A673 (cell line): ENCODE measurements at regions of chr3 and their contacts with region 1.

Region 1: GRCh38 chr3:120558771-120559241 is 37.3 kb upstream of the NDUFB4 start:
- DNase-seq: peak; percentile 86
- H3K4me3 ChIP-seq: peak overlapping the region; percentile 52
- H3K27ac ChIP-seq: no peak overlapping the region
- H3K4me1 ChIP-seq: peaks cover 5% of the 10 kb centered on the region
- H3K27me3 ChIP-seq: no peaks in the 10 kb centered on the region
- CTCF ChIP-seq: peak; percentile 96

Region 2: DNA sequence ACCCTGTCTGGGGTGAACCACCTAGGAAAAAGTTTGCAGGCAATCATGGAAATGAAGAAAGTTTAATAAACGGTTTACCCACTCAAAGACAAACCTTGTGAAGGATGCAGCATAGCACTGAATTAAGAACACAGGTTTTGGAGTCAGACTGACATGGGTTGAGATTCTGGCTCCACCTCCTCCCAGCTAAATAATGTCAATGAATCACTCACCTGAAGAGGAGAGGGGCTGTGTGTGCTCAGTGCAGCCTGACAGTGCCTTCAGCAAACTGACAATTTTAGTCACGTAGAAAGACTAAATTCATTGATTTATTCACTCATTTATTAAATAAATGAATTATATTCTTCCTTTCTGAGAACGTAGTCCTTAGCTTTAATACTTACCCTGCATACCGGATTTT is 758.0 kb before region 1 on chr3:
- CTCF ChIA-PET with region 1: no interaction called
- POLR2A ChIA-PET with region 1: no interaction called
- intact Hi-C with region 1: no loop called
- DNase-seq: no peak
- H3K4me3 ChIP-seq: no peak overlapping the region
- H3K27ac ChIP-seq: no peak overlapping the region
- H3K4me1 ChIP-seq: no peaks in the 10 kb centered on the region
- H3K27me3 ChIP-seq: peaks cover 39% of the 10 kb centered on the region
- CTCF ChIP-seq: no peak

Region 3: GRCh38 chr3:119891944-119892721 is 666.7 kb before region 1 on chr3:
- CTCF ChIA-PET with region 1: no interaction called
- POLR2A ChIA-PET with region 1: no interaction called
- intact Hi-C with region 1: loop called (anchors 5 kb)
- DNase-seq: peak; percentile 83
- H3K4me3 ChIP-seq: no peak overlapping the region
- H3K27ac ChIP-seq: no peak overlapping the region
- H3K4me1 ChIP-seq: no peaks in the 10 kb centered on the region
- H3K27me3 ChIP-seq: no peaks in the 10 kb centered on the region
- CTCF ChIP-seq: peak; percentile 78

Region 4: DNA sequence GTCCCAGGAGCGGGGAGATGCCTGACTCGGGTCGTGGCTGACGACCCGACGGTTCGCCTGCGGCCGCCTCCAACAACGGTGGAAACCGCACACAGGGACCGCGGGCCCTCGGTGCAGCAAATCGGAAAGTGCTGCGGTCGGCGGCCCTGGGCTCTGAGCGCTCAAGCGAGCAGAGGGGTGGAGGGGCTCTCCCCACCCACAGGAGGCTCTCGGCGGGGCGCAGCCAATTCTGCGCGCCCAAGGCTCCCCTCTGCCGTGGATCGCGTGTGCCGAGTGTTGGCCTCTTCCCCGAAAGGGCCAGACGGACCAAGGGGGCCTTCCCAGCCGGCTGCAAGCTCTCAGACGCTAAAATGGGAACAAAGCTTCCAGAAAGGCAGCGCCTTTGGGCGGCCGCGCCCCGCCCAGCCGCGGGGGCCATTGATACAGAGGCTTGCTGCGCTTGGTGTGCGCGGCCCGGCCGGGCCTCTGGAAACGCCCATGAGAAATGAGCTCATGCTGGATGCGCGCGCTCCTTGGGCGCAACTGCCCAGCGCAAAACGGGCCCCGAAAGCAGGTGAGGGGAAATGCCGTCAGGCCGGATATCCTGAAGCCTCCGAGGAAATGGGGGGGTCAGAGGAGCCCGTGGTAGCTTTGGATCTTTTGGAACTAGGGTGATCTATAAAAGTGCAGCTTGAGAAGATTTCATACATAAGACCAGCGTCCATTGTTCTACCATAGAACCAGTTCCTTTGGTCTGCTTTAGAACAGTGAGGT is 463.4 kb before region 1 on chr3:
- CTCF ChIA-PET with region 1: interaction called, 12 read pairs
- POLR2A ChIA-PET with region 1: no interaction called
- intact Hi-C with region 1: no loop called
- DNase-seq: peak; percentile 94
- H3K4me3 ChIP-seq: peak overlapping the region; percentile 81
- H3K27ac ChIP-seq: peak overlapping the region; percentile 99
- H3K4me1 ChIP-seq: peaks cover 7% of the 10 kb centered on the region
- H3K27me3 ChIP-seq: no peaks in the 10 kb centered on the region
- CTCF ChIP-seq: no peak

Region 5: DNA sequence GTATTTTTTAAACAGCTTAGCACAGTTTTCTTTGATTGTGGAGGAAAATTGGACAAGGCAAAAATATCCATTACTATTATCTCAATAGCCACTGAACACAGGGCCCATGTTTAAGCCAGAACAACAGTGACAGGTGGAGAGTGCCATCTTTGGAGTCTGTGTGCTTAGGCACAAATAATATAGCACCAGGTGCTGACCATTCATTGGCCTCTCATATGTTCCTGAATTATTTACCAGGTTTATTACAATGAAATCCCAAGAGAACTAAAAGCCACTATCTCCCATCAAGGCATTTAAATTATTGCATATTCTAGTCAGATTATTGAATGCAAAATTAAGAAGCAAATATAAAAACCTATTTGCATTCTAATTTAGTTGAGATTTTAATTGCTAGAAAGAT is 313.4 kb before region 1 on chr3:
- CTCF ChIA-PET with region 1: interaction called, 14 read pairs
- POLR2A ChIA-PET with region 1: no interaction called
- intact Hi-C with region 1: loop called (anchors 1 kb)
- DNase-seq: no peak
- H3K4me3 ChIP-seq: no peak overlapping the region
- H3K27ac ChIP-seq: no peak overlapping the region
- H3K4me1 ChIP-seq: no peaks in the 10 kb centered on the region
- H3K27me3 ChIP-seq: no peaks in the 10 kb centered on the region
- CTCF ChIP-seq: no peak

Region 6: GRCh38 chr3:120417272-120417911 is 141.4 kb before region 1 on chr3:
- CTCF ChIA-PET with region 1: interaction called, 29 read pairs
- POLR2A ChIA-PET with region 1: no interaction called
- intact Hi-C with region 1: loop called (anchors 1 kb)
- DNase-seq: peak; percentile 97
- H3K4me3 ChIP-seq: peak overlapping the region; percentile 25
- H3K27ac ChIP-seq: peak overlapping the region; percentile 53
- H3K4me1 ChIP-seq: peaks cover 17% of the 10 kb centered on the region
- H3K27me3 ChIP-seq: no peaks in the 10 kb centered on the region
- CTCF ChIP-seq: peak; percentile 95

Region 7: DNA sequence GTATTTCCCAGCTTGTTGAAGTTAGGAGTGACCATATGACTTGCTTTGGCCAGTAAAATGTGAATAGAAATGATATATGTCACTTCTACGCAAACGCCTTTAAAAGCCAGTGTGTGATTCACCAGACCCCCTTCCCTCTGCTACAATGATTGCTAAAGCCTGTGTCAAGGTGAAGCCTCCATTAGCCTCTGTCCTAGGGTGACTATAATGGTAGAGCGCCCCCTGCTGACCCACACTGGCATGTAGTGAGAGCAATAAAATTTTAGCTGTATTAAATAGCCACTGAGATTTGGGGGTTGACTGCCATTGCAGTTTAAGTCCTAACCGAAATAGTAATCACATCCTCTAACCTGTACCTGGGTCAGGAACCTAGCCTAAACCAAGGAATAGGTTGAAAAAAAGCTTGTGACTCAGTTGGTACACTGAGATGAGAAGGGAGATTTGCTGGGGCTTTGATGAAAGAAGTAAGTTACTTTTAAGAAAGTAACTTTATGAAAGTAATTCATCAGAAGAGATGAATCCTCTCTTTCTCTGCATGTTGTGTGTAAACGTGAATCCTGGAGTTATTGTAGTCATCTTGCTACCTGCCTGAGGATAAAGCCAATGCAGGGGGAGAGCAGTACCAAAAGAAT is 236.3 kb after region 1 on chr3:
- CTCF ChIA-PET with region 1: interaction called, 8 read pairs
- POLR2A ChIA-PET with region 1: no interaction called
- intact Hi-C with region 1: loop called (anchors 1 kb)
- DNase-seq: peak; percentile 84
- H3K4me3 ChIP-seq: no peak overlapping the region
- H3K27ac ChIP-seq: no peak overlapping the region
- H3K4me1 ChIP-seq: no peaks in the 10 kb centered on the region
- H3K27me3 ChIP-seq: no peaks in the 10 kb centered on the region
- CTCF ChIP-seq: peak; percentile 94

Region 8: DNA sequence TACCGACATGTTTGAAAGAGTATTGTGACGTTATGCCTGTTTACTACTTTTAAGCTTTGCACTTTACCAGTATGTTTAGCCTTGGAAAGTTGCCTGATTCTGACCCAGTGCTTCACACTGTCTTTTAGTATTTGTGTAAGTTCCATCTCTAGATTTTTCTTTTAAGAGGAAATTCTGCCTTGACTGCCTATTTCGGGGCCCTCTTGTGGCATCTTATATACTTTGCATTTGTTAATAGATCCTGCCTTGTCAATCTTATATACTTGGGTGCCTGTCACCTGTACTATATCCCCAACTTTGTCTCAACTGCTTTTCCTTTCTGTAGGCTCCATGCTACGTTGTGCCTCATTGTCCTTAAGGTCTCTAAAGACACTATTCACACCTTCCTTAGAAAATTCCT is 593.8 kb after region 1 on chr3:
- CTCF ChIA-PET with region 1: no interaction called
- POLR2A ChIA-PET with region 1: no interaction called
- intact Hi-C with region 1: loop called (anchors 10 kb)
- DNase-seq: peak; percentile 4
- H3K4me3 ChIP-seq: no peak overlapping the region
- H3K27ac ChIP-seq: no peak overlapping the region
- H3K4me1 ChIP-seq: no peaks in the 10 kb centered on the region
- H3K27me3 ChIP-seq: no peaks in the 10 kb centered on the region
- CTCF ChIP-seq: peak; percentile 33